OCI-LY7 (cell line): ENCODE measurements at regions of chr13 and their contacts with region 1.

Region 1: GRCh38 chr13:37495046-37495445 is 103.5 kb downstream of the POSTN start:
- DNase-seq: no peak
- H3K4me3 ChIP-seq: no peak overlapping the region
- H3K27ac ChIP-seq: no peak overlapping the region
- H3K4me1 ChIP-seq: no peaks in the 10 kb centered on the region
- CTCF ChIP-seq: no peak

Region 2: DNA sequence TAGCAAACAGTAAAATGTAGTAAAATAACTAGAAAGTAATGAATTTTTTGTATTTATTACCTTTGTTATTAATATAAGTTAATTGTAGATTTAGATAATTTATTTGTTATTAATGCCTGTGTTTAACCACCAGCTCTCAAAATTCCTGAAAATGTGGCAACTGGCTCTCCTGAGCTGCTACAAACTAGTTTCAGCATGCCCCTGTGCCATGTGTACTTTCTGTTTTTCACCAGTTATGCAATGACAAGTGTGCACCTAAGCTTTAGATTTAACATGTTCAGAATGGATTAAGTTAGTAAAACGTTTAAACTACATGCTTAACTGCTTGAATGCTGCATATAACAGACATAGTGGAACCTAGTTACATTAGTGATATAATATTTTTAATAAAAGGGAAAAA is 15.4 kb after region 1 on chr13:
- CTCF ChIA-PET with region 1: no interaction called
- POLR2A ChIA-PET with region 1: interaction called, 3 read pairs
- intact Hi-C with region 1: loop called (anchors 1 kb)
- DNase-seq: no peak
- H3K4me3 ChIP-seq: no peak overlapping the region
- H3K27ac ChIP-seq: no peak overlapping the region
- H3K4me1 ChIP-seq: no peaks in the 10 kb centered on the region
- CTCF ChIP-seq: no peak